ENCODE measurements at regions of chr7 and their contacts with region 1.

Region 1: GRCh38 chr7:518630-519483 is 789 bp downstream of the PDGFA start:
- DNase-seq: peak; percentile 71
- ATAC-seq: peak; percentile 55
- H3K4me3 ChIP-seq: peak overlapping the region; percentile 77
- H3K27ac ChIP-seq: no peak overlapping the region; the same call in 1 of the 2 replicates
- H3K4me1 ChIP-seq: peaks cover 5% of the 10 kb centered on the region
- H3K27me3 ChIP-seq: peaks cover 32% of the 10 kb centered on the region
- CTCF ChIP-seq: no peak; the same call in 1 of the 2 replicates
- POLR2A ChIP-seq: no peak
- RAD21 ChIP-seq: no peak

Region 2: GRCh38 chr7:229184-229964 is 289.5 kb before region 1 on chr7:
- CTCF ChIA-PET with region 1: no interaction called
- POLR2A ChIA-PET with region 1: no interaction called
- dilution Hi-C with region 1: no loop called
- in situ Hi-C with region 1: no loop called
- intact Hi-C with region 1: no loop called
- DNase-seq: peak; percentile 97
- ATAC-seq: peak; percentile 77
- H3K4me3 ChIP-seq: no peak overlapping the region
- H3K27ac ChIP-seq: peak overlapping the region; percentile 97
- H3K4me1 ChIP-seq: peaks cover 72% of the 10 kb centered on the region
- H3K27me3 ChIP-seq: no peaks in the 10 kb centered on the region
- CTCF ChIP-seq: 0 out of 2 replicates have a peak, but pooled peaks have one; percentile 18
- POLR2A ChIP-seq: no peak
- RAD21 ChIP-seq: no peak

Region 3: DNA sequence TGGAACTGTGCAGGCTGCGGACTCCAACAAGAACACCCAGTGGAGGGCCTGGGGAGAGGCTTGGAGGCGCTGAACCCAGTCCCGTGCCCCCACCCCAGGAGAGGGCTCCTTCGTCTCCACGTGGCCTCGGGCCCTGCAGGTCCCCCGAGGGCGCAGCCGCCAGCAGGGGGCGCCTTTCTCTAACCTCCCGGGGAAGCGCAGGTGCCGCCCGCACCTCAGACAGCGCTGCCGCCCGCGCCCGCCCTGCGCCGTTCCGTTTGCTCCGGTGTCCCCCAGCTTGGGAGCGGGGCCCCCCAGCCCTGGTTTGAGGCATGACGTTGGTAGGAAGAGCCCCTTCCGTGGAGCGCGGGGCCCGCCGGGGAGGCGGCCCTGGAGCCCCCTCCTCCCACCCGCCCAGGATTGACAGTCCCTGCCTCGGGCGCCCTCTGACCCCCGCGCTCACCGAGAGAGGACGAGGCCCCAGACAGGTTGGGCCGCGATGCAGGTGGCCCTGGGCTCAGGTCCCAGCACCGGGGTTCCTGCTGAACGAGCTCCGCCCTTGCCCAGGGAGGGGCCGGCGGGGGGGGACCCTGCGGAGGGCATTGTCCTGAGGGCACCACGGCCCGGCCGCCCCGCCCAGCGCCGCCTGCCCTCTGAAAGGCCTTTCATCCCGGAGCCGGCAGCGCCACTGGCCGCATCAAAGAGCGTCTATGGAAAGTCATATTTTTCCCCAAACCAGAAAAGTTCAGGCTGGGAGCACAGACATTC is 186.0 kb before region 1 on chr7:
- CTCF ChIA-PET with region 1: no interaction called
- POLR2A ChIA-PET with region 1: no interaction called
- dilution Hi-C with region 1: no loop called
- in situ Hi-C with region 1: no loop called
- intact Hi-C with region 1: loop called (anchors 1 kb)
- DNase-seq: peak; percentile 36
- ATAC-seq: peak; percentile 96
- H3K4me3 ChIP-seq: no peak overlapping the region; the same call in 1 of the 2 replicates
- H3K27ac ChIP-seq: no peak overlapping the region
- H3K4me1 ChIP-seq: peaks cover 2% of the 10 kb centered on the region
- H3K27me3 ChIP-seq: peaks cover 28% of the 10 kb centered on the region
- CTCF ChIP-seq: peak; percentile 74
- POLR2A ChIP-seq: no peak
- RAD21 ChIP-seq: peak; percentile 80

Region 4: GRCh38 chr7:460374-461116 is 58.3 kb before region 1 on chr7:
- CTCF ChIA-PET with region 1: no interaction called
- POLR2A ChIA-PET with region 1: no interaction called
- dilution Hi-C with region 1: no loop called
- in situ Hi-C with region 1: no loop called
- intact Hi-C with region 1: no loop called
- DNase-seq: peak; percentile 38
- ATAC-seq: peak; percentile 70
- H3K4me3 ChIP-seq: no peak overlapping the region
- H3K27ac ChIP-seq: no peak overlapping the region
- H3K4me1 ChIP-seq: peaks cover 20% of the 10 kb centered on the region
- H3K27me3 ChIP-seq: no peaks in the 10 kb centered on the region; the same call in 1 of the 2 replicates
- CTCF ChIP-seq: no peak
- POLR2A ChIP-seq: no peak
- RAD21 ChIP-seq: no peak

Region 5: DNA sequence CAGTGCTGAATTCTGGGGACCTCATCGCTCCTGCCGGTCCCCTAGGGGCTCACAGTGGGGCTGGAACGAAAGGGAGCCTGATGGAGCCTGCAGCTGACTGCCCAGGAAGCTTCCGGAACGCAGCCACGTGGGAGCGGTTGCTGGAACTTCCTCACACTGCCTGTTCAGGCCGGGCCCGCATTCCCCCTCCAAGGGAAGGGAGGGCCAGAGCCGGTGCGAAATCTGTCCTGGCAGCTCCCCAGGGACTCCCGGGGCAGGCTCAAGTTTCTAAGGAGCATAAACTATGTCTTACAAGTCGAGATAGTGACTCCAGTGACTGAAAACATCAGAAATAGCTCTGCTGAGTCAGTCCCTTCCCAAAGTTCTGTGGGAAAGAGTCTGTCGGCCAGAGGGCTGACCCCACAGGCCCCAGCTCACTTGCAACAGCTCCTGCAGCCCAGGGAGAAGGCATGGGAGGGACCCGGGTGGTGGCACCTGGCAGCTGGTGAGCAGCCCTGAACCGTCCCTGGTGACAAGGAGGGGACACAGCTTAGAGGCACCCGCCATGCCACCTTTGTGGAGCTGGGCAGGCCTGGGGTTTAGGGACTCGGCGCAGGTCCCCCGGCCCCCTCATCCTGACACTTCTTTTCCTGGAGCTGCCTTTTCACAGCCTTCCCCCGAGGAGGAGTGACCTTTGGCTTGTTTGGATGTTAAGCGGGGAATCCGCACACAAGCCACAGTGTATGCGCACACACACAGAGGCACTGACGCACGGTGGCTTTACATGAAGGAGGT is 46.8 kb before region 1 on chr7:
- CTCF ChIA-PET with region 1: no interaction called
- POLR2A ChIA-PET with region 1: no interaction called
- dilution Hi-C with region 1: no loop called
- in situ Hi-C with region 1: no loop called
- intact Hi-C with region 1: loop called (anchors 1 kb)
- DNase-seq: peak; percentile 98
- ATAC-seq: peak; percentile 98
- H3K4me3 ChIP-seq: no peak overlapping the region
- H3K27ac ChIP-seq: peak overlapping the region; percentile 78
- H3K4me1 ChIP-seq: peaks cover 18% of the 10 kb centered on the region
- H3K27me3 ChIP-seq: no peaks in the 10 kb centered on the region
- CTCF ChIP-seq: no peak
- POLR2A ChIP-seq: no peak
- RAD21 ChIP-seq: no peak

Region 6: DNA sequence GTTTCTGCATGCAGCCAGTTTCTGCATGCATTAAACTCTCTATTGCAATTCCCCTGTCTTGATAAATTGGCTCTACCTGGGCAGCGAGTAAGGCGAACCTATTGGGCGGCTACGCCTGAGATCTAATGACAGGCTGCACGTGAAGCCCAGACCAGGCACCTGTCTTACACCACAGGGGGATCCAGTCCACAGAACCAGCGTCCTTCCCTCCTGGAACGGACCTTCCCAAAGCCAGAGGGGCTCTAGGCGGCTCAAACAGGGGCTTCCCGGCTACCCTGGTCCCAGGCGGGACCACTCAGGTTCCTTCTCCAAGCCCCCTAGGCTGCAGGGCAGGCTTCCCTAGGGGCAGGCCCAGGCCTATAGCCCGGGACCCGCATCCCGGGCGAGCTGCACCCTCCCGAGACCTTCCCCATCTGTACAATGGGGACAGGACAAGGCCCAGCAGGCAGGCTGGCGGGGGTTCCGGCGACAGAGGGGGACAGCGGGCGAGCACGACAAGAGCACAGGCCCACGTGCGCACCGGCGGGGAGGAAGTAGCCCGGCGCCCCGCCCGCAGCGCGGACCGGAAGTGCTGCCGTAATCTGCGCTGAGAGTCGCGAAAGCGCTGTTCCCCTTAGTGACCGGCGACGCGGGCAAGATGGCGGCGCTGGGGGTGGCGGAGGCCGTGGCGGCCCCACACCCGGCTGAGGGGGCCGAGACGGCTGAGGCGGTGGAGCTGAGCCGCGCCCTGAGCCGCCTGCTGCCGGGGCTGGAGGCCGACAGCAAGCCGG is 207.4 kb after region 1 on chr7 and contains the start of gene DNAAF5:
- CTCF ChIA-PET with region 1: no interaction called
- POLR2A ChIA-PET with region 1: no interaction called
- dilution Hi-C with region 1: no loop called
- in situ Hi-C with region 1: no loop called
- intact Hi-C with region 1: loop called (anchors 5 kb)
- DNase-seq: peak; percentile 81
- ATAC-seq: peak; percentile 91
- H3K4me3 ChIP-seq: peak within 1 kb of the TSS; percentile 75
- H3K27ac ChIP-seq: peak within 1 kb of the TSS; percentile 68
- H3K4me1 ChIP-seq: peaks cover 17% of the 10 kb centered on the region
- H3K27me3 ChIP-seq: no peaks in the 10 kb centered on the region
- CTCF ChIP-seq: 0 out of 2 replicates have a peak, but pooled peaks have one; percentile 0
- POLR2A ChIP-seq: no peak
- RAD21 ChIP-seq: no peak; the same call in 1 of the 2 replicates
- total RNA-seq, gene DNAAF5: 12.4 and 13.9 TPM in 2 replicates

Region 7: GRCh38 chr7:774161-775109 is 255.6 kb after region 1 on chr7:
- CTCF ChIA-PET with region 1: no interaction called
- POLR2A ChIA-PET with region 1: no interaction called
- dilution Hi-C with region 1: no loop called
- in situ Hi-C with region 1: no loop called
- intact Hi-C with region 1: loop called (anchors 1 kb)
- DNase-seq: peak; percentile 20
- ATAC-seq: peak; percentile 89
- H3K4me3 ChIP-seq: no peak overlapping the region
- H3K27ac ChIP-seq: no peak overlapping the region
- H3K4me1 ChIP-seq: peaks cover 10% of the 10 kb centered on the region
- H3K27me3 ChIP-seq: no peaks in the 10 kb centered on the region
- CTCF ChIP-seq: peak; percentile 95
- POLR2A ChIP-seq: peak; percentile 36; the same call in 1 of the 2 replicates
- RAD21 ChIP-seq: peak; percentile 95

Region 8: GRCh38 chr7:876167-876967 is 357.5 kb after region 1 on chr7 and contains the start of gene GET4:
- CTCF ChIA-PET with region 1: no interaction called
- POLR2A ChIA-PET with region 1: no interaction called
- dilution Hi-C with region 1: no loop called
- in situ Hi-C with region 1: no loop called
- intact Hi-C with region 1: loop called (anchors 10 kb)
- DNase-seq: peak; percentile 93
- ATAC-seq: peak; percentile 94
- H3K4me3 ChIP-seq: peak within 1 kb of the TSS; percentile 93
- H3K27ac ChIP-seq: peak within 1 kb of the TSS; percentile 84
- H3K4me1 ChIP-seq: peaks cover 5% of the 10 kb centered on the region
- H3K27me3 ChIP-seq: no peaks in the 10 kb centered on the region
- CTCF ChIP-seq: 0 out of 2 replicates have a peak, but pooled peaks have one; percentile 3
- POLR2A ChIP-seq: peak; percentile 77
- RAD21 ChIP-seq: no peak
- total RNA-seq, gene GET4: 10.6 and 11.3 TPM in 2 replicates

Region 9: DNA sequence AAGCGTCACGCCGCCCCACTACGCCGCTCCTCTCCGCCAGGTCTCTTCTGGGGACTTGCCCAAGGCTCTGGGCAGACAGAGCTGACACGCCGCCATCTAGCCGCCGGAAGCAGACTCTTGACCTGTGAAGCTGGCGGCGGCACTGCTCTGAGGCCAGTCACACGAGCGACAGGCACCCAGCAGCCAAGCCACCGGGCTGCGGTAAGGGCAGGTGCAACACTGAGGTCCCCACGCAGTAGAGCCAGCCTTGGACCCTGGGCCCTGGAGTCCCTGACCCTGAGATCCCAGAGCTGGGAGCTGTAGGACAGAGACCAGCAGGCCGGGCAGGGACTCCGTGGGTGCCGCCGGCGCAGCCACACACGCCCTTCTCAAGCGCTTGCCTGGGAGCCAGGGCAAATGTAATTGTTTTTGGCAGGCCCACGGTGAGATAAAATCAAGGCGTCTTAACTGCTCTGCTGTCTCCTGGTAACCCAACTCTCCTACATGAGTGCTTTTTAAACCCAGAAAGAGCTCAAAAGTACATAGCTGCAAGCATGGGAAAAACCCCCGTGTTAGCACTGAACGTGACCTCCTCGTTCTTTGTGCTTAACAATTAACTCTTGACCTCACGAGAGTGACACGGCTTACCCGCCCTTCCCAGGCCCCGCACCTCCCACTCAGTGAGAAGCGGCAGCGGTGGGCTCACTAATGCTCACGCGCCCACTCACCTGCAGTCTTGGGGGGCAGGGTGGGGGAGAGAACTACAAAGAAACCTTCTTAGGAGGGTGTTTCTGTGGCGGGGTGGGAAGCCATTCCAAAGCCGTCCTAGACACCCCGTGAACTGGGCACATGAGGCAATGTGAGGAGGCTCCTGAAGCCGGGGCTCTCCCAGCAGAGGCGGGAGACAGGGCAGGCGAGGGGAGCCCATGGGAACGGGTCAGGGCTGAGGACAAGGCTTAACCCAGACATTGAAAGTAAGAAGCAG is 577.6 kb after region 1 on chr7:
- CTCF ChIA-PET with region 1: no interaction called
- POLR2A ChIA-PET with region 1: no interaction called
- dilution Hi-C with region 1: no loop called
- in situ Hi-C with region 1: no loop called
- intact Hi-C with region 1: no loop called
- DNase-seq: no peak
- ATAC-seq: no peak
- H3K4me3 ChIP-seq: no peak overlapping the region
- H3K27ac ChIP-seq: no peak overlapping the region
- H3K4me1 ChIP-seq: no peaks in the 10 kb centered on the region; the same call in 1 of the 2 replicates
- H3K27me3 ChIP-seq: no peaks in the 10 kb centered on the region
- CTCF ChIP-seq: no peak
- POLR2A ChIP-seq: no peak
- RAD21 ChIP-seq: no peak

Measured in IMR-90 (cell line).